ENCODE measurements at regions of chr14 and their contacts with region 1.

Region 1: DNA sequence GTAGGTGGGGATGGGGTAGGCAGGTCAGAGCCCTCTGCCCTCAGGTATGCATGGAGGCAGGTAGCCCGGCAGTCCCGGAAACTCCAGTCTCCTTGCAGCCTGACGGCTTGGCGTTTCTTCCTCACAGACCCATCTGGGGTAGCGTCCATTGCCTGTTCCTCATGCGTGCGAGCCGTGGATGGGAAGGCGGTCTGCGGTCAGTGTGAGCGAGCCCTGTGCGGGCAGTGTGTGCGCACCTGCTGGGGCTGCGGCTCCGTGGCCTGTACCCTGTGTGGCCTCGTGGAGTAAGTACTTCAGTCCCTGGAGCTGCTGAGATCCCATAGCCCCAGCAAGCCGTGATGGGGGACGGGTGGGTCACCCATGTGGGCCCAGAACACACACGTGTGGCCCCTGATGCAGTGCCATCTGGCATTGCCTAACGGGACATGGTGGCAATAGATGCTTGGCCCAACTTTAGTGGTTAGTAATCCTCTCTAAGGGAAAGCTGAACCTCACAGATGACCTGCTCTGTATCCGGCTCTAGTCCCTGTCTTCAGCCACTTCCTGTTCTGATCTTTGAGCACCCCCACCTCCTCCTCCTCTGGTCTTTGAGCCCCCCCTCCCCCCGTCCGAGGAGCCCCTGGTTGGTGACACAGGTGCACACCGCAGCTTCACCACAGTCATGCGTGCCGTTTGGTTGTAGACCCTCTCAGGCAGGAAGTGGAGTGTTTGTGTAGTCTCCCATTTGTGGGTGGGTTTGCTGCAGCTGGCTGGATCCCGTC is 3.7 kb downstream of the SIVA1 start:
- DNase-seq: no peak
- ATAC-seq: no peak
- H3K4me3 ChIP-seq: no peak overlapping the region
- H3K27ac ChIP-seq: no peak overlapping the region
- H3K4me1 ChIP-seq: peaks cover 45% of the 10 kb centered on the region
- H3K27me3 ChIP-seq: no peaks in the 10 kb centered on the region
- CTCF ChIP-seq: no peak

Region 2: DNA sequence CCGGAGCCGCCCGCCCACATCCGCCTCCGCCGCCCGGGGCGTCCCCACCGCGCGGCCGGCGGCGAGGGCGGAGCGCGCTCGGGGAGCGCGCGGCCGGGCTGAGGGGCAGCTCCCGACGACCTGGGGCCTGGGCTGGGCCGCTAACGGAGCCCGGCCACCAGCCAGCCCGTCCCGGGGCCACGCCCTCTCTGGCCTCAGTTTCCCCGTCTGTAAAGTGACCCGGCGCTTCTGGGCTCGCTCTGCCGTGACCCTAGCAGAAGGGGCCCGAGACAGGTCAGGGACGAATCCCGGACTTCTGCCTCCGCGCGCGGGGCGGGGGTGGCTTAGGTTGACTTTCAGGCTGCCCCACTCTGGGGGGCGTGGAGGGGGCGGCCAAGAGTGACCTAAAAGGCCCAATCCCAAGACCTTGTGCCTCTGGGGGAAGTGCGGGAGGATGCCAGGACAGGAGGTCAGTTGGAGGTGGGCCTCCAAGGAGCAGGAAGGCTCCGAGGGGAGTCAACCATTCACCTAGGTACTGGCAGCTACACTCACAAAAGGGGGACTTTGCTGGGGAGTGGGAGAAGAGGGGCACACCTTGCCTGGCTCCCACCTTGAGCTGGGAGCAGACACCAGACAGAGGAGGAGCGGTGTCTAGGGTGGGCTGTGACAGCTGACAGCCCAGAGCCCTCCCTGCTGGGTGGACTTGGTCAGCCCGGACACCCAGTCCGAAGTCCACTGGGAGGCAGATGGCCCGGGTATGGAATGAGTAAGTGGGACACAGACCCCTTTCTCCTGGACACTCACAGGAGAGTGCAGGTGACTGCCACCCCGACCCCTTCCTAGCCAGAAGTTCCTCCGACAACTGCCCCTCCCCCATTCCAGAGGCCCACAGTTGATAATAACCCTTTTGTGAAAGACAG is 39.4 kb after region 1 on chr14:
- intact Hi-C with region 1: loop called in 1 of 2 experiments (anchors 5 kb)
- DNase-seq: peak; percentile 70 to 75
- ATAC-seq: peak; percentile 49 to 61 (median 54)
- H3K4me3 ChIP-seq: peak overlapping the region; percentile 72
- H3K27ac ChIP-seq: peak overlapping the region; percentile 89
- H3K4me1 ChIP-seq: peaks cover 30% of the 10 kb centered on the region
- H3K27me3 ChIP-seq: no peaks in the 10 kb centered on the region
- CTCF ChIP-seq: no peak

Measured in psoas muscle (tissue), 8 donors.